Naive thymus-derived CD4-positive, alpha-beta T cell (primary cell): ENCODE measurements at regions of chr2 and their contacts with region 1.

Region 1: GRCh38 chr2:194545978-194546377 is 1111.0 kb upstream of the SLC39A10 start:
- DNase-seq: no peak
- ATAC-seq: no peak
- H3K4me3 ChIP-seq: no peak overlapping the region
- H3K4me3 Mint-ChIP-seq: no peak overlapping the region
- H3K27ac ChIP-seq: no peak overlapping the region
- H3K27ac Mint-ChIP-seq: no peak overlapping the region
- H3K4me1 ChIP-seq: no peaks in the 10 kb centered on the region
- H3K4me1 Mint-ChIP-seq: no peaks in the 10 kb centered on the region
- H3K27me3 ChIP-seq: no peaks in the 10 kb centered on the region
- H3K27me3 Mint-ChIP-seq: peaks cover 0 to 8% (median 0%) of the 10 kb centered on the region in 5 donors

Region 2: DNA sequence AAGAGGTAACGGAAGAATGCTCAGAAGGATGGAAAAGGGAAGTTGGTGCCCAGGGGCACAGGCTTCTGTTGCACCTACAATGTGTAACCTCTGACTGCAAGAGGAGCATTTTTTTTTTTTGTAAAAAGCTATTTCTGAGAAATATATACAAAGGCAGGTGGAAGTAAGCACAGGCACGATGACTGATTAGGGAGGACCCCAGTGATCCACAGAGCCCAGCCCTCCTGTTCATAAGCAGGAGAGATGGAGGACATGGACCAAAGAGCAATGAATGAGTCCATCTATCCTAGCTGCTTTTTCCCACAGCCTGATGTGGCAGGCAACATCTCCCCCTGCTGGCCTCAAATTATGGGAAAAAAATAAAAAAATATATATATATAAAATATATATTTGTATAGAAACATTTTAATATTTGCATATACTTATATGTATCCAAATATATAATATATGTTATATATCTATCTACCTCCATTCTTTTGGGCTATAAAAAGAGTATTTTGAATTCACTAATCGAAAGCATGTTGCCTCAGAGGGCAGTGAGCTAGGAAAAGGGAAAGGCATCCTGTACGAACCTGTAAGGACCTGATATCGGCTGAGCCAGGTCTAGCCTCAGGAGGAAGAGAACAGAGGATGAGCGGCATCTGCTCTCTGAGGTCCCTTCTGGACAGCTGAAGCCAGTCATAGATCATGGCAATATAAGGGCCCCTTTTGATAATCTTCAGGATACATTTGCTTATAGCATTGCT is 1791.4 kb after region 1 on chr2:
- CTCF ChIA-PET with region 1: no interaction called
- POLR2A ChIA-PET with region 1: no interaction called
- intact Hi-C with region 1: loop called in 1 of 2 experiments (anchors 5 kb)
- DNase-seq: peak in 5 of 9 donors; percentile 10 to 39 (median 19)
- ATAC-seq: peak; percentile 52
- H3K4me3 ChIP-seq: no peak overlapping the region
- H3K4me3 Mint-ChIP-seq: no peak overlapping the region
- H3K27ac ChIP-seq: no peak overlapping the region
- H3K27ac Mint-ChIP-seq: no peak overlapping the region
- H3K4me1 ChIP-seq: no peaks in the 10 kb centered on the region
- H3K4me1 Mint-ChIP-seq: peaks cover 0 to 6% (median 1%) of the 10 kb centered on the region in 7 donors
- H3K27me3 ChIP-seq: no peaks in the 10 kb centered on the region
- H3K27me3 Mint-ChIP-seq: peaks cover 0 to 18% (median 3%) of the 10 kb centered on the region in 5 donors